Cardiac septum (tissue), 1 donor: ENCODE measurements at regions of chr1 and their contacts with region 1.

Region 1: GRCh38 chr1:110630839-110631663 is 24.9 kb upstream of the KCNA2 start:
- DNase-seq: peak; percentile 89

Region 2: DNA sequence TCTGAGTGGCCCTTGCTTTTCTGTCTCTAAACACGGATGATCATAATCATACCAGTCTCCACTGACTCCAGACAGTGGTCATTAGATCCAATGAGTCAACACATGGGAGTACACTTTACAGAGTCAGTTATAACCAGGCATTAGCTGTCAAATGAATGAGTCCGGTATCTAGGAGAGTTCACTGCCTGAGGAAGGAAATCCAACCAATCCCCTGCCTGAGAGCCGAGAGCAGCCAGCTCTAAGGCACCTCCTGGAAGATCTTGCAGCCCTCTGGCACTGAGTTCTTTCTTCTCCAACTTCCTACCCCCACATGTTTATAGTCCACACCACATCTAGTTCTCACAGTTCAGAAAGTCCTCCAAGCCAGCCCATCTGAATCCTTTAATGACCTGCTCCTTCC is 321.3 kb before region 1 on chr1:
- intact Hi-C with region 1: no loop called
- DNase-seq: no peak

Region 3: DNA sequence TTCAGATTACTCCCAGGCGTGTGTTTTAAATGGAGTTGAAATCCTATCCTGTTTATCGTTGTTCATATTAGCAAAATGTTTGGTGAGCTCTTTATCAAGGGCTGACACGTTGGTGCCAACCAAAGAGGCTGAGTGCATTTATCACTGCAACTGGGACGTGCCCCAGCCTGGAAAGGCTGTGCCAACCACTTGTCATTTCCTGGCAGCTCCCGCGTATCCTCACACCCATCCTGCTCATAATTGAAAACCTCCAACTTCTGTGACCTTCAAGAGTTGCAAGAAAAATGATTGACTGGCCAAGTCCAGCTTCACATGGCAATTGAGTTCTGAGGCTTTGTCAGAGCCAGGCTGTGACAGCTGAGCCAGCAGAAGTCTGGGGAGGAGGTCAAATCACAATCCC is 87.4 kb after region 1 on chr1:
- intact Hi-C with region 1: loop called (anchors 2 kb)
- DNase-seq: no peak

Region 4: DNA sequence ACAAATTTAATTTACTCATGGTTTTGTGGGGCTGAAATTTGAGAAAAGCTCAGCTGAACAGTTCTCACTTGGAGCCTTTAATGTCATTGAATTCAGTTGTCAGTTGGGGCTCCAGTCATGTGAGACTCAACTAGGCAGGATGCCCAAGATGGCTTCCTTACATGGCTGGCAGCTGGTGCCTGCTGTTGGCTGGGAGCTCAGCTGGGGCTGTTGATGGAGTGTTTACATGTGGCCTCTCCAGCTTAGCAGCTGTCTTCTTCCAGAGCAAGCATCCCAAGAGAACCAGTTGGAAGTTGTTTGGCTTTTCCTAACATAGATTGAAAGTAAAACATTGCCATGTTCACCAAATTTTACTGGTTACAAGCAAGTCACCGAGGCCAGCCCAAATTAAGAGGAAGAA is 125.5 kb after region 1 on chr1:
- intact Hi-C with region 1: loop called (anchors 1 kb)
- DNase-seq: no peak

Region 5: DNA sequence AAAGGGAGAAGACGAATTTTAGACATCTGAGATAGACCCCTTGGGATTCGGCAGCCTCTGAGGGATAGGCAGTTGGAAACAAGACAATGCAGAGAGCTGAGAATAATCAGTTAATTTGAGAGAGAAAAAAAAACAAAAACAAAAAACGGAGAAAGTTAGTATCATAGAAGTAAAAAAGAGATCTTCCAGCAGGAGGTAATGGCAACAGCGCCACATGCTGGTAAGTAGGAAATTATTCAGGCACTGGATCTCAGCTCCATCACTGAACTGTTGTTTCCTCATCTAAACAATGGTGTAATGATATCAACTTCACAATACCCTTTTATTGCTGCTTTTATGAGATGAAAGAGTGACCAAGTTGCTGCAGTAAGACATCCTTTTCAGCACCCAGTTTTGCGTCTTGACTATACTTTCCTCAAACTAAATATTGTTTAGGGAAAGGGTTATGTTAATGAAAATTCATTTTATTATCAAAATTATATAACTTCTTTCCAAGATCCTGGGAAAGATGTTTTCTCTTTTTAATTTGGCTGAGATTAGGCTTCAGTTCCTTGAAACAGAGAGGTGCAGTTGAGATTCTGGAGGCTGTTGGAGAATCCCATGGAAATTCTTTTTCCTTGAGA is 135.1 kb after region 1 on chr1:
- intact Hi-C with region 1: loop called (anchors 1 kb)
- DNase-seq: no peak

Region 6: GRCh38 chr1:110780600-110781484 is 149.8 kb after region 1 on chr1:
- intact Hi-C with region 1: loop called (anchors 2 kb)
- DNase-seq: no peak